ENCODE measurements at regions of chr2 and their contacts with region 1.

Region 1: DNA sequence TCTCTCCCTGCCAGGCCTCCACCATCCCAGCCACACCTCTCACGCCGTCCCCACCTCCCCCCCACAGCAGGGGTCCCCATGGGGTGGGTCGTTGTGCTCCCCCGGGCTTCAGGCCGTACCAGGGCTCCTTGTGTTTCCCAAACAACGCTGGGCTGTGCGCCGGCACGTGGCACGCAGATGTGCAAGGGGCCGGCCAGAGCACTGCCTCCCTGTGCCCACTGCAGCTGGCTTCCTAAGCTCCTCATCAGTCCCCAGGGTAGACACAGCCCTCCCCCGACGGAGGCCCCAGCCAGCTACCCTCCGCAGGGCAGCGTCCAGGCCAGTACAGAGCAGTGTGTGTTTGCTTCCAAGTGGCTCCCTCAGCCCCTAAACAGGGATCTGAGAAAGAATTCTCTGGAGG is 34.0 kb downstream of the BIN1 start:
- DNase-seq: no peak

Region 2: DNA sequence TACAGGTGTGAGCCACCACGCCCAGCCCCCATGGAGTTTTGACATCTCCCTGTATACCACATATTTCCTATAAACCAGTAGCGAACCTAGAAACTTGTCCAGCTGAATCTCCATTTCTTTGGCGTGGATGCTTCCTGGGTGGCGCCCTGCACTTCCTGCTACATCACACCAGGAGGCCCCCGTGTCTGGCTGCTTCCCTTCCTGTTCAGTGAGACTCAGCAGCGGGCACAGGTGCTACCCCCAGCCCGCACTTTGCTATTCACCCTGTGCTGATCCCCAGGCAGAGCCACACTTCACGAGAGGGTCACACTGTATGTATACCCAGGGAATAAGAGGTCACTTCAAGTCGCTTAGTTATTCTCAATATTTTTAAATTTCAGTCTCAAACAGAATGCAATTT is 112.1 kb after region 1 on chr2:
- intact Hi-C with region 1: loop called (anchors 5 kb)
- DNase-seq: peak; percentile 39

Region 3: DNA sequence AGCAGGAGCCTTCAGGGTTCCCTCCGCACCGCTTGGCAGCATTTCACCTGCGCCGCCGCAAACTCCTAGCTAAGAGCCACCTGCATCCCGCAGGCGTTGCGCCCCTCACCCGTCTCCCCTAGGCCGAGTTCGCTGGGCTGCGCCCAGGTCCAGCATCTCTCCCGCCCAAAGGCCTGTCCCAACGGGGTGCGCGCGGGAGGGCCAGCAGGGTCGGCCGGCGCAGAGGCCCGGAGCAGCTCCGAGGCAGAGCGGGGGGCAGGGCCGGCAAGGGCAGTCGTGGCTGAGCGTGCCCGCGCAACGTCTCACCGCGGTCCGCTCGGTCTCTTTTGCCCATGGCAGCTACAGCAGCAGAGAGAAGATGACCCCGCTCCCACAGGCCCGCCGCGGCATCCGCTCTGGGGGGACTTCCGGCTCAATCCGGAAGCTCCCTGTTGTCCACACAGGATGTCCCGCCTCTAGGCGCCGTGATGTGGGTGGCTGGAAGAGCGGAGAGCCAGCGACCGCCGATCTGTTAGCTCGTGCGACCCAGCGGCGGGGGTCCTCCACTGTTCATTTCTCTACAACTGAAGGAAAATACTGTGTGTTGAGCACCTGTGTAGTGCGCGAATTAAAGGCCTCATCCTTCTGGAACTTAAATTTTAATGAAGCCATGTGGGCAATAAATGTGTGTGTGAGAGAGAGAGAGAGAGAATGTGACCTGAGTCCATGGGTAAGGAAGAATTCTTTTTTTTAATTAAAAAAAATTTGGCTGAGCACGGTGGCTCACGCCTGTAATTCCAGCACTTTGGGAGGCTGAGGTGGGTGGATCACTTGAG is 221.0 kb after region 1 on chr2 and contains the start of gene ERCC3:
- intact Hi-C with region 1: loop called (anchors 10 kb)
- DNase-seq: peak; percentile 90
- total RNA-seq, gene ERCC3: 23.4 TPM

Region 4: GRCh38 chr2:127355386-127356008 is 282.5 kb after region 1 on chr2:
- intact Hi-C with region 1: no loop called
- DNase-seq: no peak

Region 5: GRCh38 chr2:127463155-127463991 is 390.4 kb after region 1 on chr2:
- intact Hi-C with region 1: loop called (anchors 10 kb)
- DNase-seq: no peak